CD4-positive, alpha-beta T cell (primary cell): ENCODE measurements at regions of chr10 and their contacts with region 1.

Region 1: DNA sequence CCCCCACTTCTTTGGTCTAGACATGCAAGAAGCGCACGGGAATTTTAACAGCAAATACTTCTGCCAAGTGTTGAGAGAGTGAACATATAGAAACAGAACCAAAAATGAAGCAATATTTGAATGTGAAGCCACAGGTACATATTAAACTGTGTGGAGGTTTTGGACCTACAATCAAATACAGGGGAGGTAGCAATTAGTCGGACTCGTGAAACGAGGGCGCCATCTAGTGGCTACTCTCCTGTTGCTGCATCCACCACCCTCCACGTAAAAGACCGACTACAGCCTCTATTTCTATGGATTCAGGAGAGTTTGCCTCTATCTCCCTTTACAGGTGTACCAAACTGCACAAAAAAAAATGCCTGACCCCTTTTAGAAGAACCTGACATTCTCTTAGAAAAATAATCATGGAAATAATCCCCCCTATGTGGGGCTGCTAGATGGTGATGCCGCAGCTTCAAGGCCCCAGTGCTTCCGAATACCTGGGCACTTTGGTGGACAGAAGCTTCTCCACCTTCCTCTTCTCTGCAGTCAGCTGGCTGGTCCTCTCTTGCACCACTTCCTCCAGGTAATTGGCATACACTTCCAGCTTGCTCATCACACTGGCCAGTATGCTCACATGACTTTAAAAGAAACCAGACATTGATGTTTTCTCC is 31.7 kb downstream of the TECTB start:
- DNase-seq: peak; percentile 52 to 84 (median 64)
- ATAC-seq: peak; percentile 61
- H3K4me3 ChIP-seq: no peak overlapping the region
- H3K4me3 Mint-ChIP-seq: no peak overlapping the region
- H3K27ac ChIP-seq: no peak overlapping the region
- H3K27ac Mint-ChIP-seq: no peak overlapping the region
- H3K4me1 ChIP-seq: peaks cover 2% of the 10 kb centered on the region
- H3K4me1 Mint-ChIP-seq: no peaks in the 10 kb centered on the region
- H3K27me3 ChIP-seq: peaks cover 0 to 16% of the 10 kb centered on the region in 2 experiments
- H3K27me3 Mint-ChIP-seq: peaks cover 40% of the 10 kb centered on the region
- CTCF ChIP-seq: peak; percentile 82

Region 2: GRCh38 chr10:110556969-110557601 is 1757.9 kb before region 1 on chr10:
- CTCF ChIA-PET with region 1: no interaction called
- POLR2A ChIA-PET with region 1: no interaction called
- intact Hi-C with region 1: loop called in 1 of 2 experiments (anchors 10 kb)
- DNase-seq: peak; percentile 42 to 86 (median 60)
- ATAC-seq: peak; percentile 98
- H3K4me3 ChIP-seq: no peak overlapping the region
- H3K4me3 Mint-ChIP-seq: no peak overlapping the region
- H3K27ac ChIP-seq: no peak overlapping the region
- H3K27ac Mint-ChIP-seq: no peak overlapping the region
- H3K4me1 ChIP-seq: peaks cover 5% of the 10 kb centered on the region
- H3K4me1 Mint-ChIP-seq: peaks cover 4% of the 10 kb centered on the region
- H3K27me3 ChIP-seq: peaks cover 0 to 4% of the 10 kb centered on the region in 2 experiments
- H3K27me3 Mint-ChIP-seq: peaks cover 5% of the 10 kb centered on the region
- CTCF ChIP-seq: peak; percentile 85

Region 3: GRCh38 chr10:112115799-112116385 is 199.1 kb before region 1 on chr10:
- CTCF ChIA-PET with region 1: no interaction called
- POLR2A ChIA-PET with region 1: no interaction called
- intact Hi-C with region 1: loop called in 1 of 2 experiments (anchors 1 kb)
- DNase-seq: peak in 9 of 14 experiments; percentile 7 to 56 (median 26)
- ATAC-seq: no peak
- H3K4me3 ChIP-seq: no peak overlapping the region
- H3K4me3 Mint-ChIP-seq: no peak overlapping the region
- H3K27ac ChIP-seq: no peak overlapping the region
- H3K27ac Mint-ChIP-seq: no peak overlapping the region
- H3K4me1 ChIP-seq: no peaks in the 10 kb centered on the region
- H3K4me1 Mint-ChIP-seq: no peaks in the 10 kb centered on the region
- H3K27me3 ChIP-seq: no peaks in the 10 kb centered on the region
- H3K27me3 Mint-ChIP-seq: peaks cover 4% of the 10 kb centered on the region
- CTCF ChIP-seq: peak; percentile 47

Region 4: DNA sequence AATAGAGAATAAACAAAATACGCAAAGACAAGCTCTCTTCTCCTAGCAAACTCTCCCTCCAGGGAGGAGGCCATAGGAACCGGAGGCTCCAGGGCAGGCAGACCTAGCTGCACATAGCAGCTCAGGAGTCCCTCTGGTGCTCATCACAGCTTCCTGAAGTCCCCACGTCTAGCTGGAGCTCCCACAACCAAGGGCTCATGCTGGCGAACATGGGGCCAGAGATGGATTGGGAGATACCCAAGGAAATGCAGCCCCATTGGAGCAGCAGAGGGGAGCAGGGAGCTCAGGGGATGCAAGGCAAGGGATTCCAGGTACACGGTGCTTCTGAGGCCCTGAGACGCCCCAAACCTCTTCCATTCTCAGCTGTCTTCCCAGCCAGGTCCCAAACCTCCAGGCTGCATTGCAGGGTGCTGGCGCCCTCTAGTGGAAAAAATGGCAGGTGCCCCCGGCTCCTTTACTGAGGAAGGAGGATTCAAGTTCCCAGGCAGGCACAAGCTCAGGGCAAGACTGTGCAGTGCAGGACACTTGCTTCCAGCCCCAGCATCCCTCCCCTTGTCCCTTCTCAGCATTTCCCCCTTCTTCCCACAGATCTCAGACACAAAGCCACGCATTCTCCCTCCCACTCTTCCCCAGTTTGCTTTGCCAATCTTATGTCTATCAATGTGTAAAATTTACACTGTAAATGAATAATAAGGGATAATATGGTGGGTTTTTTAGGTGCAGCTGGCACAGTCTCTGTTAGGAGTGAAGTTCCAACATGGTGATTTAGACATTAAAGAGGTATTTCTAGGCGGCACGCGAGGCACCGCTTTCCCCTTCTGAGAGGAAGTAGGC is 177.6 kb before region 1 on chr10:
- CTCF ChIA-PET with region 1: no interaction called
- POLR2A ChIA-PET with region 1: no interaction called
- intact Hi-C with region 1: loop called in 1 of 2 experiments (anchors 10 kb)
- DNase-seq: peak; percentile 32 to 66 (median 47)
- ATAC-seq: peak; percentile 46
- H3K4me3 ChIP-seq: no peak overlapping the region
- H3K4me3 Mint-ChIP-seq: no peak overlapping the region
- H3K27ac ChIP-seq: no peak overlapping the region
- H3K27ac Mint-ChIP-seq: no peak overlapping the region
- H3K4me1 ChIP-seq: peaks cover 4% of the 10 kb centered on the region
- H3K4me1 Mint-ChIP-seq: no peaks in the 10 kb centered on the region
- H3K27me3 ChIP-seq: no peaks in the 10 kb centered on the region
- H3K27me3 Mint-ChIP-seq: no peaks in the 10 kb centered on the region
- CTCF ChIP-seq: peak; percentile 77

Region 5: GRCh38 chr10:112434988-112435619 is 120.2 kb after region 1 on chr10:
- CTCF ChIA-PET with region 1: no interaction called
- POLR2A ChIA-PET with region 1: no interaction called
- intact Hi-C with region 1: loop called in 1 of 2 experiments (anchors 5 kb)
- DNase-seq: peak in 3 of 14 experiments; percentile 41 to 46 (median 44)
- ATAC-seq: no peak
- H3K4me3 ChIP-seq: no peak overlapping the region
- H3K4me3 Mint-ChIP-seq: no peak overlapping the region
- H3K27ac ChIP-seq: no peak overlapping the region
- H3K27ac Mint-ChIP-seq: no peak overlapping the region
- H3K4me1 ChIP-seq: no peaks in the 10 kb centered on the region
- H3K4me1 Mint-ChIP-seq: no peaks in the 10 kb centered on the region
- H3K27me3 ChIP-seq: no peaks in the 10 kb centered on the region
- H3K27me3 Mint-ChIP-seq: no peaks in the 10 kb centered on the region
- CTCF ChIP-seq: peak; percentile 45

Region 6: DNA sequence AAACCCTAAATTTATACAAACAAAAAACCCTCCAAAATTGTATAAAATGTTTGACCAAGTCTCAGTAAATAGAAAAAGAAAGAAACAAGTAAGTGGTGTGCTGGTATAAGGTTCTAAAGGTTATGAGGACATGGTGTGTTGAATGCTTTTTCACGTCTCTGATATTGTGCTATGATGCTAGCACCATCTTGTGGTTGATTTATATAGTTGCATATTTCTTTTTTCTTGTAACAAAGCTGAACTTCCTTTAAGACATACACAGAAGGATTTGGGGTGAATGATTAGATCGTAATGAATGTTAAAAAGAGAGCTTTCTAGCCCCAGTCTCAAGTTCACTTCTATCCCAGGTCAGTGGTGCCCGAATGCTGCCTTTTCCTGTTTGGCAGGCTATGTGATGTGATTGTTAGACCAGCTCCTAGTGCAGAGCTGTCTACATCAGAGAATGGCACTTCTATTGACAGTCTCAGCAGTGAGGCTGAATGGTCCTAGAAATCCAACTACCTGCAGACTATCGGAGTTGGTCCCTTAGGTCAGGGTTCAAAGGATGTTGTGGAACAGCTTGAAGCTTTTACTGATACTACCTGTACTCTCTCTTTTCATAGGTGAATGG is 157.0 kb after region 1 on chr10:
- CTCF ChIA-PET with region 1: no interaction called
- POLR2A ChIA-PET with region 1: no interaction called
- intact Hi-C with region 1: loop called in 1 of 2 experiments (anchors 10 kb)
- DNase-seq: peak in 3 of 14 experiments; percentile 52 to 62 (median 60)
- ATAC-seq: peak; percentile 73
- H3K4me3 ChIP-seq: no peak overlapping the region
- H3K4me3 Mint-ChIP-seq: no peak overlapping the region
- H3K27ac ChIP-seq: no peak overlapping the region
- H3K27ac Mint-ChIP-seq: no peak overlapping the region
- H3K4me1 ChIP-seq: peaks cover 2% of the 10 kb centered on the region
- H3K4me1 Mint-ChIP-seq: peaks cover 13% of the 10 kb centered on the region
- H3K27me3 ChIP-seq: no peaks in the 10 kb centered on the region
- H3K27me3 Mint-ChIP-seq: no peaks in the 10 kb centered on the region
- CTCF ChIP-seq: peak; percentile 78